Psoas muscle (tissue), 8 donors: ENCODE measurements at regions of chr7 and their contacts with region 1.

Region 1: GRCh38 chr7:94509879-94510581 is 421 bp downstream of the CASD1 start:
- DNase-seq: peak; percentile 63 to 80
- ATAC-seq: peak; percentile 82 to 88 (median 85)
- H3K4me3 ChIP-seq: peak overlapping the region; percentile 98
- H3K27ac ChIP-seq: peak overlapping the region; percentile 97
- H3K4me1 ChIP-seq: peaks cover 41% of the 10 kb centered on the region
- H3K27me3 ChIP-seq: no peaks in the 10 kb centered on the region
- CTCF ChIP-seq: peak; percentile 40

Region 2: DNA sequence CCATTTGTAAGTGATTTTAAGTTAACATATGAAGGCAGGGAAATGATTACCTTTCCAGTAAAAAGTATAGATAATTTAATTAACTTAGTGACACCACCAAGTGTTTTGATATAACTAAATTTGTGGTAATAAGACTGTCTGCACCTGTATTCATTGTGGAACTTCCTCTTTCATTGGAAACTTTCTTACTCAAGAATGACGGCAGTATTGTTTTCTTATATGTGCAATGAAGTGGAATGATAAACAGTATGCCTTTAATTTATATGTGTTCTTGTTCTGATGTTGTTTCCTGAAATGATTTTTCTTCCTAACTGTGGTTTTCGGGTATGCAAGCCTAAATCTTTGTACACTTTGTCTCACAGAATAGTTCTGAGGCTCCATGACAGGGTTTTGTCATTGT is 46.0 kb after region 1 on chr7:
- intact Hi-C with region 1: no loop called
- DNase-seq: no peak
- ATAC-seq: no peak
- H3K4me3 ChIP-seq: no peak overlapping the region
- H3K27ac ChIP-seq: no peak overlapping the region
- H3K4me1 ChIP-seq: no peaks in the 10 kb centered on the region
- H3K27me3 ChIP-seq: no peaks in the 10 kb centered on the region
- CTCF ChIP-seq: no peak

Region 3: GRCh38 chr7:94657771-94658693 is 148.0 kb after region 1 on chr7:
- intact Hi-C with region 1: loop called in 1 of 2 experiments (anchors 5 kb)
- DNase-seq: peak; percentile 87 to 95
- ATAC-seq: peak; percentile 93 to 98 (median 96)
- H3K4me3 ChIP-seq: peak overlapping the region; percentile 66
- H3K27ac ChIP-seq: no peak overlapping the region
- H3K4me1 ChIP-seq: peaks cover 10% of the 10 kb centered on the region
- H3K27me3 ChIP-seq: peaks cover 0 to 29% (median 3%) of the 10 kb centered on the region in 3 donors
- CTCF ChIP-seq: no peak

Region 4: GRCh38 chr7:94810496-94810895 is 300.5 kb after region 1 on chr7:
- intact Hi-C with region 1: no loop called
- DNase-seq: no peak
- ATAC-seq: no peak
- H3K4me3 ChIP-seq: no peak overlapping the region
- H3K27ac ChIP-seq: no peak overlapping the region
- H3K4me1 ChIP-seq: no peaks in the 10 kb centered on the region
- H3K27me3 ChIP-seq: no peaks in the 10 kb centered on the region
- CTCF ChIP-seq: no peak